IMR-90 (cell line): ENCODE measurements at regions of chr5 and their contacts with region 1.

Region 1: DNA sequence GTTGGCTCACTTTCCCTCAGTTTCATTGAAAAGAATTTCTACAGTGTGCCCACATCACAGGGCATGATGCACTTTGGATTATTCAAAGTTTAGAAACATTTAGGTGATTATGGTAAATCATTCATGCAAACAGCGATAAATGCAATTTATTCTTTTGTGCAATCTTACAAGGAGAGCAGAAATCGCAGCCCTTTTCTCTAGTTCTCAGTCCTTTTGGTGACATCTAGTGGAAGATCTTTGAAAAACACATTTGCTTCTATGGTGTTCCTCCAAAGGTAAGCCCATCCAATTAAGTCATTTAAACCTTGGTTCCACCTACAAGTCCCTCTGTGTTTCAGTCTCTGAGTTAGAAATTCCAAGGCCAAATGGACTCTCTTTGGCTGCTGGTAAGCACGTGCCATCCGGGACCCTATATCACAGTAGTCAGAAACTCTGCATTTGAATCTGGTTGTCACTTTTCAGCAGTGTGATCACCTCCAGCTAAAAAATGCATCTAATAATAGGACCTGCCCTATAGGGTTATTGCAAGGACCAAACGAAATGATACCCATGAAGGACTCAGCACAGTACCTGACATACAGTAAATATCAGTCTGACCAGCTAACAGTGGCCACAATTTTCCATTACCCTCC is 66.4 kb downstream of the MACROH2A1 start:
- DNase-seq: peak; percentile 77
- ATAC-seq: peak; percentile 42
- H3K4me3 ChIP-seq: no peak overlapping the region
- H3K27ac ChIP-seq: no peak overlapping the region
- H3K4me1 ChIP-seq: peaks cover 31% of the 10 kb centered on the region
- H3K27me3 ChIP-seq: no peaks in the 10 kb centered on the region
- CTCF ChIP-seq: peak; percentile 69
- POLR2A ChIP-seq: no peak
- RAD21 ChIP-seq: peak; percentile 92

Region 2: DNA sequence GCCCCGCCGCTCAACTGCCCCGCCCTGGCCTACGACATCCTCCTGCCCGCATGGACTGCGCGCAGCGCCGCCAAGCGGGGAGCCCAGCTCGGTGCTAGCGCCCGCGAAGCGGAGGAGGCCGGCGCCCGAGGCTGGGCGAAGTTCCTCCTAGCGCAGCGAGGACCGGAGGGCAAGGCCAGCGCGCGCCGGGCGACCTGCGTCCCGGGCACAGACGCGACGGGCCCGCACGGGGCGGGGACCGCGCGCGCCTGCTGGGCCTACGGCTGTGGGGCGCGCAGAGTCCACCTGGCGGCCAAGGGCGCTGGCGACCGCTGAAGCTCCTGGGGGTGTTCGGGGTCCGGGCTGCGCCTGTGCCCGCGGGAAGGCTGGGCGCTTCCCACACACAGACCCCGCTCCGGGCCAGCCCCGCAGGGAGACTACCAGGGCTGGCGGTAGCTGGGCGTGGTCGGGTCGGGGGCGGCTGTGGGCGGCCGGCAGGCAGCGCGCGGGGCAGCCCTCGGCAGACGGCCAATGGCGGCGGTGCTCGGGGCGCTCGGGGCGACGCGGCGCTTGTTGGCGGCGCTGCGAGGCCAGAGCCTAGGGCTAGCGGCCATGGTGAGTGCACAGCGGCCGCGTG is 427.9 kb before region 1 on chr5 and contains the start of gene PCBD2:
- CTCF ChIA-PET with region 1: no interaction called
- POLR2A ChIA-PET with region 1: no interaction called
- dilution Hi-C with region 1: no loop called
- in situ Hi-C with region 1: no loop called
- intact Hi-C with region 1: loop called (anchors 2 kb)
- DNase-seq: peak; percentile 83
- ATAC-seq: peak; percentile 93
- H3K4me3 ChIP-seq: peak within 1 kb of the TSS; percentile 80
- H3K27ac ChIP-seq: peak within 1 kb of the TSS; percentile 91
- H3K4me1 ChIP-seq: no peaks in the 10 kb centered on the region
- H3K27me3 ChIP-seq: no peaks in the 10 kb centered on the region
- CTCF ChIP-seq: peak; percentile 92
- POLR2A ChIP-seq: peak; percentile 34; the same call in 1 of the 2 replicates
- RAD21 ChIP-seq: peak; percentile 68
- total RNA-seq, gene PCBD2: 2.2 and 2.8 TPM in 2 replicates

Region 3: DNA sequence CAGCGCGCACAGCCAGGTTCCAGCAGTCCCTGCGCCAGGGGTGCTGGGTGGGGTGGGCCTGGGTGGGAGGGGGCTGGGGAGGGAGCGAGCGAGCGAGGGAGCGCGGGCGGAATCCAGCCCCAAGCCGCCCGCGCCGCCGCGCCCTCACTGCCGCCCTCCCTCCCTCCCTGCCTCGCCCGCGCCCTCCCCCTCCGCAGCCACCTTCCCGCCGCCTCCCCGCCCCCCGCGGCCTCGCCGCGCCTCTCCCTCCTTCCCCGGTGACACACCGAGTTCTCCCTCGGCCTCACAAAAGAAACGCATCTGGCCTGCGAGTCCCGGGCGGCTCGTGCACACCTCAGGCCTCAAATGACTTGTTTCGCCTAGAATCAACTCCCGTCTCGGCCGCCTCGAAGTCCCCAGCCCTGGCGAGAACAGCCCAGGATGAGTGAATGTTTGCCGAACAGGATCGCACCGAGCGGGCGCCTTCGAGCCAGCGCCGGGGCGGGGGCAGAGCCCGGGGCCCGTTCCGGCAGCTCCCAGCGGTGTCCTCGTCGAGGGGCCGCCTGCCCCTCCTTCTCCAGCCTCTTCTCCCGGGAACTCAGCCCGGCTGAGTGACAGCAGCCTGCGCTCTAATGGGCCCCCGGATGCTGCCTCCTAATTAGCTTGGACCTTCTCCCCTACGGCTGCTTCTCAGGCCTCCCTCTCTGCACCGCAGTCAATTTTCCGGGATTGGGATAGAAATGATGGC is 298.2 kb before region 1 on chr5:
- CTCF ChIA-PET with region 1: no interaction called
- POLR2A ChIA-PET with region 1: no interaction called
- dilution Hi-C with region 1: no loop called
- in situ Hi-C with region 1: no loop called
- intact Hi-C with region 1: loop called (anchors 1 kb)
- DNase-seq: peak; percentile 69
- ATAC-seq: peak; percentile 73
- H3K4me3 ChIP-seq: peak overlapping the region; percentile 60
- H3K27ac ChIP-seq: peak overlapping the region; percentile 92
- H3K4me1 ChIP-seq: peaks cover 19% of the 10 kb centered on the region; the same call in 1 of the 2 replicates
- H3K27me3 ChIP-seq: peaks cover 26% of the 10 kb centered on the region
- CTCF ChIP-seq: no peak
- POLR2A ChIP-seq: no peak
- RAD21 ChIP-seq: no peak; the same call in 1 of the 2 replicates

Region 4: DNA sequence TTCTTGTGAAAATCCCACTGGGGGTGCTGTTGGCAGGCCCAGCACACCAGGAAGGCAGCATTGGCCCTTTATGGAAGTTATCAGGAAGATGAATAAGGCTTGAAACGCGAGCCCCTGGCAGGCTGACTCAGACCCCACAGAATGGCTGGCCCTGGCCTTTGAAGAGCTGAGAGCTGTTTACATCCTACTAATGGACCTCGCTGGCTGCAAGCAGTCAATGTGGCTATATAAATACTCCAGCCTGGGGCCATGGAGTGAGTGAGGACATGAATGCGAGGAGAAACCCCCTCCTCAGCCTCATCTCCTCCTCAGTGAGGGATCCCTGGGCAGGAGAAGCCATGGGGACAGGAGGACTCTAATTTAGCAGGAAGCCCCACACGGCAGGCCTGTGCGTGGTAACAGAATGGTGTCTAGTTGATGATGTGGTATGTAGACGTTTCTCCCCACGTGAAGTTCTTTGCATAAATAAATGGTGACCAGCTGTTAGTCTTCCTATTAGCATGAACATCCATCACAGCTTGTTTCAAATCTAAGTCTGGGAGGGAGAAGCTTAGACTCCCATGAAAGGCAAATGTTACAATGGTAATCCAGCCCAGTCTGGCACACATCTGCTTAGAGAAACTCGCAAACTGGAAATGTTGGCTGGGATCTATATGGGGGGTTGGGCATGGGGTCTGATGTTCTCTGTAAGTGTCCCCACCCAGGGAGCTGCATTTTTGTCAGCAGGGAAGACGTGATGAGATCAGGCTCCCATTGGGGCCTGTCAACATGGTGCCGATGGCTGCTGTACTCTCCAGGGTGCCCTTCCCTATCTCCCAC is 123.5 kb before region 1 on chr5:
- CTCF ChIA-PET with region 1: interaction called, 3 read pairs
- POLR2A ChIA-PET with region 1: no interaction called
- dilution Hi-C with region 1: no loop called
- in situ Hi-C with region 1: no loop called
- intact Hi-C with region 1: loop called (anchors 1 kb)
- DNase-seq: peak; percentile 98
- ATAC-seq: peak; percentile 87
- H3K4me3 ChIP-seq: no peak overlapping the region
- H3K27ac ChIP-seq: peak overlapping the region; percentile 98
- H3K4me1 ChIP-seq: peaks cover 40% of the 10 kb centered on the region
- H3K27me3 ChIP-seq: no peaks in the 10 kb centered on the region
- CTCF ChIP-seq: peak; percentile 54
- POLR2A ChIP-seq: no peak
- RAD21 ChIP-seq: peak; percentile 61

Region 5: GRCh38 chr5:135437796-135438560 is 105.3 kb after region 1 on chr5:
- CTCF ChIA-PET with region 1: no interaction called
- POLR2A ChIA-PET with region 1: no interaction called
- dilution Hi-C with region 1: no loop called
- in situ Hi-C with region 1: no loop called
- intact Hi-C with region 1: no loop called
- DNase-seq: peak; percentile 96
- ATAC-seq: peak; percentile 50
- H3K4me3 ChIP-seq: no peak overlapping the region
- H3K27ac ChIP-seq: peak overlapping the region; percentile 16; the same call in 1 of the 2 replicates
- H3K4me1 ChIP-seq: peaks cover 24% of the 10 kb centered on the region
- H3K27me3 ChIP-seq: no peaks in the 10 kb centered on the region
- CTCF ChIP-seq: 0 out of 2 replicates have a peak, but pooled peaks have one; percentile 6
- POLR2A ChIP-seq: no peak
- RAD21 ChIP-seq: no peak